ENCODE measurements at regions of chr5 and their contacts with region 1.

Region 1: DNA sequence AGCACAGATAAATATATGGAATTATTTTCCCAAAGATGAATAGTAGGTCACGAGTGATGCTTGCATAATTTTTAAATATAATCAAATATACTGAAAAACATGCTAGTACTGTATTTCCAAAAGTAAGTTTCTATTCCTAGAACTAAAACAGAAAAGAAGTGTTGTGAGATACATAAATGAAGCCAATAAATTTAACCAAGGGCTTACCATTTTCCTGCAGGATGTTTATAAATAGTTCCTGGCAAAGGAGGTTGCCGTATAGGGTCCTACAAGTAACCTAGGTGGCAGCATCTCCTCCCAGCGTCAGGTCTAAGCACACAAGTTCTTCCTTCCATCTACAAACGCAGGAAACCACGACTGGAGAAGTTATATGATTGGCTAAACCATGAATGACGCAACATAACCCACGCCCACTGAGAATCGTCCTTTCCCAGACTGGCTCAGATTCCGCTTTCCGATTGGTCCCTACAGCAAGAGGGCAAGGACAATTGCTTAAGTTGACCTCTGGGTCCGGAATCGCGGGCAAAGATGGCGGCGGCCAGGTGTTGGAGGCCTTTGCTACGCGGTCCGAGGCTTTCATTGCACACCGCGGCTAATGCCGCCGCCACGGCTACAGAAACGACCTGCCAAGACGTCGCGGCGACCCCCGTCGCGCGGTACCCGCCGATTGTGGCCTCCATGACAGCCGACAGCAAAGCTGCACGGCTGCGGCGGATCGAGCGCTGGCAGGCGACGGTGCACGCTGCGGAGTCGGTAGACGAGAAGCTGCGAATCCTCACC is at the start of gene MRPS30:
- DNase-seq: peak; percentile 91
- H3K4me3 Mint-ChIP-seq: peak within 1 kb of the TSS; percentile 97
- H3K27ac Mint-ChIP-seq: peak within 1 kb of the TSS; percentile 97
- H3K4me1 Mint-ChIP-seq: peaks cover 12% of the 10 kb centered on the region
- H3K27me3 Mint-ChIP-seq: no peaks in the 10 kb centered on the region
- CTCF ChIP-seq: no peak
- total RNA-seq, gene MRPS30: 66.6 and 67.6 TPM in 2 replicates

Region 2: DNA sequence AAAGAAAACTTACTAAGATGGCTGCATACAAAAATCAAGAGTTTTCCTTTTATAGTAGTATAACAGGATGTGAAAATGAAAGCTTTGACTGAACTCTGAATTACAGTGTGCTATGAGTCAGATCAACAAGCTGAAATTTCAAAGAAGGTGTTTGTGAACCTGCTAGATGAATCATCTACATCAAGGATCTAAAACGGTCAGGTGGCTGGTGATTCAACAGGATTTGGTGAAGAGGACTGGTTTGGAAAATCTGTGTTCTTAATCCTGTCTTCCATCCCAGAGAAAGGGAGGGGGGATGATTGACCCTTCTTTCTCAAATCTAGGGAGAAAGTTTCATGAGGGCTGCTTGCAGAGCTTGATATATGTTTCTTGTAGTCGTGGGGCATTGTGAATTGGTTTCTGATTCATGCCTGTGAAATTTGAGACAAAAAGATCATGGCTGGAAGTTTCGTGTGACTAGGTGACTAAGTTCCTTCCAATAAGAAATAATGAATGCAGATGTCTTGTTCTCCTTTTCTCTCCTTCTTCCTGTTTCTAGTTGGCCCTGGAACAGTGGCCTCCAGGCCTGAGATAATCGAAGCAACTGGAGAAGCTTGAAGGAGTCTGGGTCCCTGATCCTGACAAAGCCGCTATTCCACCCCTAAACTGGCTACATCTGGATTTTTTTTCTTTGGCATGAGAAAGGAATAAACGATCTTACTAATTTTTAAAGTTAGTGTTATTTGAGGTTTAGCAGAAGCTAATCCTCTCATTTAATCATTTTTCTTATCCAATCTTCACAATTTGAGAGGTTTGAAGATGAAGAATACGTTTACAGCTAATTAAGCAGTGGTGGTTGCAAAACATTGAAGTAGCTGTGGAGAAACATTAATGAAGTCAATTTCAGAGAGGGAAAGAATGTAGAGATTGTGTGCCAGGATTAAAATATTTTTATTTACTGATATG is 67.3 kb after region 1 on chr5:
- CTCF ChIA-PET with region 1: no interaction called
- intact Hi-C with region 1: loop called (anchors 5 kb)
- DNase-seq: peak; percentile 56
- H3K4me3 Mint-ChIP-seq: peak overlapping the region; percentile 43
- H3K27ac Mint-ChIP-seq: peak overlapping the region; percentile 99
- H3K4me1 Mint-ChIP-seq: peaks cover 18% of the 10 kb centered on the region
- H3K27me3 Mint-ChIP-seq: no peaks in the 10 kb centered on the region
- CTCF ChIP-seq: no peak

Region 3: DNA sequence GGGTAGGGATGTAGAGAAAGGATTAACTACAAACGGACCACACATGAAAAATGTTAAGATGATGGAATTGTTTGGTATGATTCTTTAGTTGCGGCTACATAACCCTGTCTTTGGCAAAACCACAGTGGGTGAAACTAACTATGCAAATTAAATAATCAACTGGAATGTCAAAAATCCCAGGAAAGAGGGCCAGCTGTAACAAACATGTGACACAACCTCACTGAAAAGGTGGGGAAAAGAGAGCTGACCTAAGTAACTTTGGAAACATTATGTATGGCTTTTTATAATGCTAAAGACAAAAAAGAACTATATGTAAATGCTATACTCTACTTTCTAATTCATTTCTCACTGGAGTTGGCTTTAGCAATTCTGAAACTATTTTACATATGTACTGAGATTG is 252.1 kb after region 1 on chr5:
- CTCF ChIA-PET with region 1: no interaction called
- intact Hi-C with region 1: no loop called
- DNase-seq: no peak
- H3K4me3 Mint-ChIP-seq: no peak overlapping the region
- H3K27ac Mint-ChIP-seq: no peak overlapping the region
- H3K4me1 Mint-ChIP-seq: no peaks in the 10 kb centered on the region
- H3K27me3 Mint-ChIP-seq: no peaks in the 10 kb centered on the region
- CTCF ChIP-seq: no peak

Region 4: DNA sequence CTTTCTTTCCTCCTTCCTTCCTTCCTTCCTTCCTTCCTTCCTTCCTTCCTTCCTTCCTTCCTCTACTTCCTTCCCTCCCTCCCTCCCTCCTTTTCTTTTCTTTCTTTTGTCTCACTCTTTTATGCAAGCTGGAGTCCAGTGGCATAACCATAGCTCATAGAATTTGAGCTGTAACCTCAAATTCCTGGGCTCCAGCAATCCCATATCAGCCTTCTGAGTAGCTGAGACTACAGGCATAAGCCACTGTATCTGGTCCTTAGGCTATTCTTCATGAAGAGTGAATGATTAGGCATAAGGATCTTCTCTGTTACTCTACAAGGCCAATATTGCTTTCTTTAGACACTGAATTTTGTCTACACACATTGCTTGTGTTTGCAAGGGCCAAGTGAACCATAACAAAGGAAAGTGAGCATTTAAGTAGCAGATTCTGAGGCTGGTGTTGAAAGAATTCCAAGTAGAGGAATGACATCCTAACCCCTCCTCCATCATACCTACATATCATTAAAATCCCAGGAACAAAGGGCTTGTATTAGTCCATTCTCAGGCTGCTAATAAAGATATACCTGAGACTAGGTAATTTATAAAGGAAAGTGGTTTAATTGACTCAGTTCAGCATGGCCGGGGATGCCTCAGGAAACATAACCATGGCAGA is 594.3 kb after region 1 on chr5:
- CTCF ChIA-PET with region 1: no interaction called
- intact Hi-C with region 1: no loop called
- DNase-seq: no peak
- H3K4me3 Mint-ChIP-seq: no peak overlapping the region
- H3K27ac Mint-ChIP-seq: no peak overlapping the region
- H3K4me1 Mint-ChIP-seq: no peaks in the 10 kb centered on the region
- H3K27me3 Mint-ChIP-seq: no peaks in the 10 kb centered on the region
- CTCF ChIP-seq: no peak